ENCODE measurements at regions of chr6 and their contacts with region 1.

Region 1: GRCh38 chr6:4313044-4313686 is 177.8 kb upstream of the ECI2 start:
- DNase-seq: peak; percentile 98
- ATAC-seq: peak; percentile 78
- H3K4me3 ChIP-seq: peak overlapping the region; percentile 30; the same call in 1 of the 2 replicates
- H3K27ac ChIP-seq: peak overlapping the region; percentile 91
- H3K4me1 ChIP-seq: peaks cover 28% of the 10 kb centered on the region
- H3K27me3 ChIP-seq: no peaks in the 10 kb centered on the region
- CTCF ChIP-seq: peak; percentile 74

Region 2: DNA sequence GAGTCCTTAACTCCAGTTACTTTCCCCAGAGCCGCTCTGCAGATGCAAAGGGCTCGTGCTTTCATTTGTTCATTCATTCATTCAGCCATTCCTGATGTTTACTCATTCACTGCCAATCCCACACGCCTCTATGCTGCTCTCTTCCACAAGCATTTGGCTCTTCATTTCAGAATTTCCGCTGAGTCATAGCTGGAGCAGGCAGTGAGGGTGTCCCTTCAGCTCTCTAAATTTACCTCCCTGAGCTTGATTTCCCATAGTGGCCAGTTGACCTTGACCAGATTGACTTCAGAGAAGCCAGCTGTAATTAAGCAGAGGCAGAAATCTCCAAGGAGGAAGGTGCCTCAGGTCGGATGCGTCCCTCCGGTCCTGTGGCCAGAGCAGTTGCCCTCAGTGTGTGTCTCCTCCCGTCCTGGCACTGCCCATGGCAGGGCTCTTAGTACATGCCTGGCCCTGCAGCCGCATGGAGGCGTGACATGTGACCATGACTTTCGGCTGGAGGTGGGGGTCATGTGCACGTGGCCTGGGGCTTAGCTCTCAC is 89.3 kb after region 1 on chr6:
- CTCF ChIA-PET with region 1: no interaction called
- POLR2A ChIA-PET with region 1: no interaction called
- intact Hi-C with region 1: loop called (anchors 2 kb)
- DNase-seq: peak; percentile 93
- ATAC-seq: peak; percentile 91
- H3K4me3 ChIP-seq: no peak overlapping the region
- H3K27ac ChIP-seq: peak overlapping the region; percentile 92
- H3K4me1 ChIP-seq: peaks cover 26% of the 10 kb centered on the region
- H3K27me3 ChIP-seq: no peaks in the 10 kb centered on the region
- CTCF ChIP-seq: no peak

Region 3: GRCh38 chr6:4603291-4603690 is 290.1 kb after region 1 on chr6:
- CTCF ChIA-PET with region 1: no interaction called
- POLR2A ChIA-PET with region 1: interaction called, 11 read pairs
- intact Hi-C with region 1: no loop called
- DNase-seq: peak; percentile 53
- ATAC-seq: no peak
- H3K4me3 ChIP-seq: no peak overlapping the region
- H3K27ac ChIP-seq: no peak overlapping the region
- H3K4me1 ChIP-seq: peaks cover 54% of the 10 kb centered on the region
- H3K27me3 ChIP-seq: no peaks in the 10 kb centered on the region
- CTCF ChIP-seq: no peak

Region 4: GRCh38 chr6:4615891-4616290 is 302.7 kb after region 1 on chr6:
- CTCF ChIA-PET with region 1: no interaction called
- POLR2A ChIA-PET with region 1: no interaction called
- intact Hi-C with region 1: loop called (anchors 1 kb)
- DNase-seq: no peak
- ATAC-seq: no peak
- H3K4me3 ChIP-seq: no peak overlapping the region
- H3K27ac ChIP-seq: no peak overlapping the region
- H3K4me1 ChIP-seq: no peaks in the 10 kb centered on the region
- H3K27me3 ChIP-seq: no peaks in the 10 kb centered on the region
- CTCF ChIP-seq: no peak

Region 5: DNA sequence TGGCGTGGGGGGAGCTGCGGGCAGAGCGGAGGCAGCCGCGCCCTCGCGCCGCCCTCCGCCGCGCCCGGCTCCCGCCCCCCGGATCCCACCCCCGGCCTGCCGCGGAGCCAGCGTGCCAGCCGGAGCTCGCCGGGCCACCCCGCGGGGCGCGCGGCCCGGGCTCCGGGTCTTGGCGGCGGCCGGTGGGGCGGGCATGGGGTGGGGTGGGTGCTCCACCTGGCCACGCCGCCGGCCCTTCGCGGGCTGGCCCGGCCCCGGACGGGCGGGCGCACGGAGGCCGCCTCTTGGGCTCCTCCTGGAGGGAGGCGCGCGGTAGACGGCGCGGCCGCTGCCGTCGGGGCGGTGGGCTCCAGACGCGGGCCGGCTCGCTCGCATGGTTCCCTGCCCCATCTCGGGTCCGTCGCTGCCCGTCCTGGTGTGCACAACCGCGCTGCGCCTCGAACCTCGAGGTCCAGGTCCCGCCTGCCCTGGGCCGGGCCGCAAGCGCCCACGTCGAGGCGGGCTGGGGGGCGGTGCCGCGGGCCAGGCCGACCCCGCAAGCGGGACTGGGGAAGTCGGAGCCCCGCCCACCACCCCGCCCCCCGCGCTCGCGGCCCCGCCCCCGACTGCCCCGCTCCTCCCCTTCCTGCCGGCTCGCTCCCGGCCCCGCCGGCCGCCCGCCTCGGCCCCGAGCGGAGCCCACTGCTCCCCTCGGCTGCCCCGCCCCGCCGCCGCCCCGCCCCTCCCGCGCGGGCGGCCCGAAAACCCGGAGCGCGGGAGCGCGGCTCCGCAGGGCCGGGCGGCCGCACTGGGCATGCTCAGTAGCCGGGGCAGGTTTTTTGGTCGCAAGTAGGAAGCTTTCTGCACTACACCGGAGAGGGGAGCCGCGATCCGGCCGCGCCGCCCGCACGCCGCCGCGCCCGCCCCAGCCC is 462.7 kb after region 1 on chr6 and contains the start of gene CDYL:
- CTCF ChIA-PET with region 1: interaction called, 11 read pairs
- POLR2A ChIA-PET with region 1: no interaction called
- intact Hi-C with region 1: loop called (anchors 10 kb)
- DNase-seq: peak; percentile 94
- ATAC-seq: peak; percentile 79
- H3K4me3 ChIP-seq: peak within 1 kb of the TSS; percentile 74
- H3K27ac ChIP-seq: peak within 1 kb of the TSS; percentile 39; the same call in 1 of the 2 replicates
- H3K4me1 ChIP-seq: peaks cover 5% of the 10 kb centered on the region; the same call in 1 of the 2 replicates
- H3K27me3 ChIP-seq: no peaks in the 10 kb centered on the region
- CTCF ChIP-seq: peak; percentile 29; the same call in 1 of the 2 replicates
- total RNA-seq, gene CDYL: 34.4 and 38.4 TPM in 2 replicates

Region 6: GRCh38 chr6:4936681-4937041 is 623.5 kb after region 1 on chr6:
- CTCF ChIA-PET with region 1: no interaction called
- POLR2A ChIA-PET with region 1: no interaction called
- intact Hi-C with region 1: loop called (anchors 1 kb)
- DNase-seq: peak; percentile 58
- ATAC-seq: no peak
- H3K4me3 ChIP-seq: no peak overlapping the region
- H3K27ac ChIP-seq: no peak overlapping the region
- H3K4me1 ChIP-seq: peaks cover 22% of the 10 kb centered on the region
- H3K27me3 ChIP-seq: no peaks in the 10 kb centered on the region
- CTCF ChIP-seq: peak; percentile 81

Measured in PC-3 (cell line).